ENCODE measurements at regions of chr3 and their contacts with region 1.

Region 1: GRCh38 chr3:94024385-94024784 is 4.0 kb downstream of the STX19 start:
- DNase-seq: no peak
- CTCF ChIP-seq: no peak

Region 2: GRCh38 chr3:93843981-93844380 is 180.4 kb before region 1 on chr3:
- CTCF ChIA-PET with region 1: no interaction called
- POLR2A ChIA-PET with region 1: no interaction called
- DNase-seq: no peak
- CTCF ChIP-seq: no peak

Region 3: DNA sequence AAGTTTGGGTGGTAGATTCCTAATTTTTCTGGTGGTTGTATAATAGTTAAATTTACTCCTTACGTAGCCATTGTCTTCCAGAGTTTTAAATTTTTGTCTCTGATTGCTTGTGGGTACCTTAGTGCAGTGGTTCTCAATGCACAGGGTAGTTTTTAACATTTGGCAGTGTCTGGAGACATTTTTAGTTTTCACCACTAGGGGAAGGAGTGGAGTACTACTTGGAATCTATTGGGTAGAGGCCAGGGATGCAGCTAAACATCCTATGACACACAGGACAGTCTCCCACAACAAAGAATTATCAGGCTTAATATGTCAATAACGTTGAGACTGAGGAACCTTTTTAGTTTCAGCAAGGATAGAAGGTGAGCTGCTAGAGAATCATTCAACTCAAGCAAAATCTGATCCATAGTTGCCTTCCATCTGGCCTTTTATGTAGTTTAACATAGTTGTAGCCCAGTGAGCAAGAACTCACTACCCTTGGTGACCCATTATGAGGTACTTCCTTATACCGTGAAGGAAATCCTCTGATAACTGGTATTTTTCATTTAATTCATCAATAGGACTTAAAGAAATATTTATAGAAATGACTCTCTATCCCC is 12.6 kb after region 1 on chr3:
- CTCF ChIA-PET with region 1: interaction called, 14 read pairs
- POLR2A ChIA-PET with region 1: no interaction called
- DNase-seq: peak; percentile 18
- CTCF ChIP-seq: peak; percentile 31

Region 4: DNA sequence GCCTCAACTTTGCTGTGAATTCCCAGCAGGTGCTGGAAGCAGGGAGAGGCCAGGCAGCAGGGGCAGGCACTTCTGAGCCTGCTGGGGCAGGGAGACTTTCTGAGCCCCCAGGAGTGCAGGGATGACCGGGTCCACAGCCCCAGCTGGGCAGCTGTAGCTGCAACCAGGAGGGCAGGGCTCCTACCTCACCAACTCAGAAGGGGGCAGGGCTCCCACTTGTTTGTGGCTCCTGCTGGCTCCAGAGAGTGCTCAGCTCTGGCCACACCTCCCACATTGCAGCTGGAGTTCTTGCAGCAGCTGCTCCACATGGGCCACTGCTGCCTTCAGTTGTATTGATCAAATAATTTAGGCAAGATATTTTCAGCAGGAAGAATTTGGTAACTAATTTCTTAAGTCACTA is 850.8 kb after region 1 on chr3:
- CTCF ChIA-PET with region 1: no interaction called
- POLR2A ChIA-PET with region 1: no interaction called
- DNase-seq: no peak
- CTCF ChIP-seq: no peak

Measured in GM10248 (cell line).